Naive thymus-derived CD4-positive, alpha-beta T cell (primary cell): ENCODE measurements at regions of chr1 and their contacts with region 1.

Region 1: DNA sequence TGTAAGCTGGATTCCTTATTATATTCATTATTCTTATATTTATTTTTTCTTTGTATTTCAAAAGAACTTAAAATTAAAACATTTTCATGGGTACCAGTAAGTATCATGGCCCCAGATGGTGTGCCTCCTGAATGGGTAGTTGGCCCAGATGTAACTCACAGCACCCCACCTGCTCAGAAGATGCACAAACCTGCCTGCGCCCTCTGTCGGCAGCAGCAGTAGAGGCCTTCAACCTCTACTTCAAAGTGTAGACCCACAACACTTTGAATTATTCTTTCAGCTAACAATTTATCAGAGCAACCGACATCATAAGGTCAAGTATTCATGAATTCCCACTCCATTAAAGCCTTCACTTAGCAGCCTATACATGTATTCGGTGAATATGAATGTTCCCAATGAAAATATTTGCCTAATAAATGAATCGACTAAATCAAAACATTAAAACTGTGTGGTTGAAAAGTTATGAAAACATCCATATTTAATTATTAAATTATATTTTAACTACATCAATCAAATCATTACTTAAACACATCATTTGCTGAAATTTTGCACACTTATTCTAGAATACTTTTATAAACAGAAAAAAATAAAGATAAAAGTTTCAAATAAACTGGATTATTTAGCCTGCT is 25.4 kb downstream of the PIGM start:
- DNase-seq: peak; percentile 38 to 67 (median 61)
- ATAC-seq: peak; percentile 88
- H3K4me3 ChIP-seq: no peak overlapping the region
- H3K4me3 Mint-ChIP-seq: no peak overlapping the region
- H3K27ac ChIP-seq: no peak overlapping the region
- H3K27ac Mint-ChIP-seq: no peak overlapping the region
- H3K4me1 ChIP-seq: no peaks in the 10 kb centered on the region
- H3K4me1 Mint-ChIP-seq: no peaks in the 10 kb centered on the region
- H3K27me3 ChIP-seq: no peaks in the 10 kb centered on the region
- H3K27me3 Mint-ChIP-seq: peaks cover 0 to 33% (median 6%) of the 10 kb centered on the region in 5 donors

Region 2: GRCh38 chr1:159936273-159936904 is 70.0 kb before region 1 on chr1:
- CTCF ChIA-PET with region 1: interaction called, 17 read pairs
- POLR2A ChIA-PET with region 1: no interaction called
- intact Hi-C with region 1: loop called (anchors 1 kb)
- DNase-seq: peak; percentile 49 to 90 (median 74)
- ATAC-seq: peak; percentile 90
- H3K4me3 ChIP-seq: no peak overlapping the region
- H3K4me3 Mint-ChIP-seq: no peak overlapping the region
- H3K27ac ChIP-seq: no peak overlapping the region
- H3K27ac Mint-ChIP-seq: peak overlapping the region in 1 of 9 donors; percentile 17
- H3K4me1 ChIP-seq: no peaks in the 10 kb centered on the region
- H3K4me1 Mint-ChIP-seq: peaks cover 0 to 20% (median 11%) of the 10 kb centered on the region in 7 donors
- H3K27me3 ChIP-seq: no peaks in the 10 kb centered on the region
- H3K27me3 Mint-ChIP-seq: peaks cover 0 to 23% (median 8%) of the 10 kb centered on the region in 5 donors

Region 3: GRCh38 chr1:159960721-159961381 is 45.6 kb before region 1 on chr1:
- CTCF ChIA-PET with region 1: no interaction called
- POLR2A ChIA-PET with region 1: no interaction called
- intact Hi-C with region 1: no loop called
- DNase-seq: no peak
- ATAC-seq: no peak
- H3K4me3 ChIP-seq: no peak overlapping the region
- H3K4me3 Mint-ChIP-seq: no peak overlapping the region
- H3K27ac ChIP-seq: no peak overlapping the region
- H3K27ac Mint-ChIP-seq: no peak overlapping the region
- H3K4me1 ChIP-seq: no peaks in the 10 kb centered on the region
- H3K4me1 Mint-ChIP-seq: no peaks in the 10 kb centered on the region
- H3K27me3 ChIP-seq: no peaks in the 10 kb centered on the region
- H3K27me3 Mint-ChIP-seq: peaks cover 6 to 24% (median 14%) of the 10 kb centered on the region in 5 donors